Right cardiac atrium (tissue), 5 donors: ENCODE measurements at regions of chr20 and their contacts with region 1.

Region 1: DNA sequence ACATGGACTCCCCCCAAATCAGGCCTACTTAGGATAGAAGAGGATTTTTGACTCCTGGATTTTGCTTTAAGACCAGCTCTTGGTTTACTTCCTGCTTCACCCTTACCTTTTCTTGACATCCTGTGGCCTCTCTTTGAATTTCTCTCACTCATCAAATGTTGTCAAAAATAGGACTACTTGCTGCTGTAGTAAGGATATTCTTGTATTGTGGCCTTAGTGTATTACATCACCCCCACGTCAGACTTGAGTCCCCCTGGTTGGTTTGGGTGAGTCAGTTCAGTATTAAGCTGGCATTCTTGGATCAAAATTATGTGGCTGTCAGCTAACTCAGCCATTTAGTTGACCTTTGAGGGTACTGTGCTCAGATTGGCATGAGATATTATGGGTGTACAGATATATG is 1.1 kb downstream of the TPX2 start:
- DNase-seq: no peak
- ATAC-seq: no peak
- H3K4me3 ChIP-seq: no peak overlapping the region
- H3K27ac ChIP-seq: no peak overlapping the region
- H3K4me1 ChIP-seq: no peaks in the 10 kb centered on the region
- H3K27me3 ChIP-seq: no peaks in the 10 kb centered on the region

Region 2: GRCh38 chr20:31806564-31807355 is 66.6 kb after region 1 on chr20:
- intact Hi-C with region 1: loop called in 1 of 4 experiments (anchors 10 kb)
- DNase-seq: no peak
- ATAC-seq: peak; percentile 47 to 71
- H3K4me3 ChIP-seq: no peak overlapping the region
- H3K27ac ChIP-seq: peak overlapping the region; percentile 58
- H3K4me1 ChIP-seq: peaks cover 11% of the 10 kb centered on the region
- H3K27me3 ChIP-seq: no peaks in the 10 kb centered on the region